ENCODE measurements at regions of chr7 and their contacts with region 1.

Region 1: GRCh38 chr7:35801392-35802101 is 690 bp downstream of the SEPTIN7 start:
- DNase-seq: peak; percentile 79
- ATAC-seq: peak; percentile 33
- H3K4me3 Mint-ChIP-seq: peak overlapping the region; percentile 98
- H3K27ac Mint-ChIP-seq: peak overlapping the region; percentile 99
- H3K4me1 Mint-ChIP-seq: peaks cover 41% of the 10 kb centered on the region
- H3K27me3 Mint-ChIP-seq: no peaks in the 10 kb centered on the region
- CTCF ChIP-seq: peak; percentile 27

Region 2: DNA sequence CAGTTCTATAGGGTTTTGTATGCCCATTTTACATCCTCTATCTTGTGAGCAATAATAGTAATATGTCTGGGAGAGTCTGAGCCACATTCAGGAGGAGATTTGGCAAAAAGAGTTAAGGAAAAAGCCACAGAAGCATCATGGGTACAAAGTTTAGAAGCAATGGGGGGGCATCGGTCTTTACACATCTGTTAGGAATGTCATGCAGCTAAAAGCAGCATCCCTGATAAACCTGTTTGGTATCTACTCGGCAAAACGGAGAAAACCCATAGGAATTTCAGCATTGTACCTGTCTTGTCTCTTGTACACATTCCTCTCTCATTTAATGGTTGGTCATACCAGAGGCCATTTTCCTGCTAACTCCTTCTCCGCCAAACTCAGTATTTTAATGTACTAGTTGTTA is 94.1 kb before region 1 on chr7:
- CTCF ChIA-PET with region 1: interaction called, 4 read pairs
- POLR2A ChIA-PET with region 1: interaction called, 19 read pairs
- intact Hi-C with region 1: no loop called
- DNase-seq: no peak
- ATAC-seq: no peak
- H3K4me3 Mint-ChIP-seq: no peak overlapping the region
- H3K27ac Mint-ChIP-seq: no peak overlapping the region
- H3K4me1 Mint-ChIP-seq: peaks cover 14% of the 10 kb centered on the region
- H3K27me3 Mint-ChIP-seq: no peaks in the 10 kb centered on the region
- CTCF ChIP-seq: no peak

Region 3: DNA sequence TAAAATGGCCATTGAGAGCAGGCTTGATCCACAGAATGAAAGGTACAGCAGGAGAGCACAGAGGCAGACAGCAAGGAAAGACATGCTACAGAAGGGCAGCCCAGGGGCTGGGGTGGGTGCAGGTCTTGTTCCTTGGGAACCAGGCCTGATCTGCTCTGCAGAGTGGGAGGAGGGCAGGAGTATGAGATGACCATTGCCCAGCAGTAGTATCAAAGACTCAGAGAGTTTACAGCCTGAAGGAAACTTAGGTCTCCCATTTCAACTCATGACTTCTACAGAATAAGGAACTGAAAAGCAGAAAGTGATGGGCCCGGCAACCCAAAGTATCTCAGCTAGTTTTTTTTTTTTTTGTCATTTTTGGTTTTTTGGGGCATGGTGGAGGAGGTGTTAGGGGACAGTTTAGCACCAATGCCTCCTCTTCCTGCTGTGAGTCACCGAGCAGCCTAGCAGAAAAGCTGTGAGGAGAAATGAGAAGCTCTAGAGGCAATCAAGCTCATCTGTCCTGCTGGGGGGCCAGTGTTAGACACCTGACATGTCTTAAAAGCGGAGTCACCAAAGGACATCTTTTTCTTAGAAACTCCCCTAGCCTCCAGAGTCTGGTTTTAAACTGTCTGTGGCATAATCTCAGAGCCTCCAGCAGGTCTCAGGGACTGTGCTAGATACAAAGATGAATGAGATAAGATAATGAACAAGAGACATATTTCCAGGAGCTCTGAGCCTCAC is 72.3 kb before region 1 on chr7:
- CTCF ChIA-PET with region 1: interaction called, 7 read pairs
- POLR2A ChIA-PET with region 1: interaction called, 21 read pairs
- intact Hi-C with region 1: loop called (anchors 5 kb)
- DNase-seq: peak; percentile 82
- ATAC-seq: peak; percentile 80
- H3K4me3 Mint-ChIP-seq: no peak overlapping the region
- H3K27ac Mint-ChIP-seq: peak overlapping the region; percentile 70
- H3K4me1 Mint-ChIP-seq: peaks cover 66% of the 10 kb centered on the region
- H3K27me3 Mint-ChIP-seq: no peaks in the 10 kb centered on the region
- CTCF ChIP-seq: no peak

Region 4: DNA sequence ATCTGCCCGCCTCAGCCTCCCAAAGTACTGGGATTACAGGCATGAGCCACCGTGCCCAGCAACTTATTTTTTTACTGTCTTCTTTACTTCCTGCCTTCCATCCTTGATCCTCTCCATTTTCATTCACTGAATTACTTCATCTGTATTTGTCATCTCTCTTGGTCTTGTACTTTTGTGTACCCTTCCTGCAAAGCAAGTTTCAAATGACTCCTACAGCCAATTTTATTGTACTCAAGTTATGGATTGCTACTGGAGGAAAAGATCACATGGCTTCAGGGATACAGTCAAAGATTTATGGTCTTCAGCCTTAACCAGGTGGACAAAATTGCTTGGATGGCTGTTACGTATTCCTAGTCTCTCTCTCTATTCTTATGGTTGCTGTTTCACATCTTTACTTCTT is 21.9 kb after region 1 on chr7:
- CTCF ChIA-PET with region 1: interaction called, 8 read pairs
- POLR2A ChIA-PET with region 1: interaction called, 19 read pairs
- intact Hi-C with region 1: no loop called
- DNase-seq: no peak
- ATAC-seq: peak; percentile 38
- H3K4me3 Mint-ChIP-seq: no peak overlapping the region
- H3K27ac Mint-ChIP-seq: no peak overlapping the region
- H3K4me1 Mint-ChIP-seq: peaks cover 42% of the 10 kb centered on the region
- H3K27me3 Mint-ChIP-seq: no peaks in the 10 kb centered on the region
- CTCF ChIP-seq: no peak